ENCODE measurements at regions of chr9 and their contacts with region 1.

Region 1: GRCh38 chr9:4077499-4078102 is 222.3 kb downstream of the GLIS3 start:
- DNase-seq: peak; percentile 75 to 83
- H3K4me3 ChIP-seq: no peak overlapping the region
- H3K27ac ChIP-seq: peak overlapping the region in 1 of 3 donors; percentile 26
- H3K4me1 ChIP-seq: peaks cover 0 to 14% of the 10 kb centered on the region in 2 donors
- H3K27me3 ChIP-seq: no peaks in the 10 kb centered on the region
- CTCF ChIP-seq: peak in 5 of 6 experiments; percentile 15 to 59 (median 54)
- POLR2A ChIP-seq: no peak

Region 2: DNA sequence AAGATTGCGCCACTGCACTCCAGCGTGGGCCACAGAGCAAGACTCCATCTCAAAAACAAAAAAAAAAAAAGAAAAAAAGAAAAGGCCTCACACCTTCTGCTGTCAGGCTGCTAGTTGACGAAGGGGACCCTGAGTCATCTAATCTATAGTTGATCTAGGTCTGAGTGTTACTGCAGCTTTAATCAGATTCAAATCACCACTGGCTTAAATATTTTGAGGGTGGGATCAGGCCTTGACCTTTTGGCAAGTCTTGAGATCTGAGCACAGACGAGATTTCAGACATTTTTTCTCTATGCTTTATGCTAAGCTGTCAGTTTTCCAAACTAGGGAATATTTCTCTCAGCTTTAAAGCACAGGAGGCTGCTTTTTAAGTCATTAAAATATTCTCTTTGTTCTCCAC is 18.7 kb before region 1 on chr9:
- intact Hi-C with region 1: loop called (anchors 2 kb)
- DNase-seq: no peak
- H3K4me3 ChIP-seq: no peak overlapping the region
- H3K27ac ChIP-seq: no peak overlapping the region
- H3K4me1 ChIP-seq: no peaks in the 10 kb centered on the region
- H3K27me3 ChIP-seq: no peaks in the 10 kb centered on the region
- CTCF ChIP-seq: no peak
- POLR2A ChIP-seq: no peak

Region 3: GRCh38 chr9:4590430-4591122 is 513.0 kb after region 1 on chr9:
- intact Hi-C with region 1: no loop called
- DNase-seq: peak; percentile 45 to 46
- H3K4me3 ChIP-seq: no peak overlapping the region
- H3K27ac ChIP-seq: peak overlapping the region; percentile 44 to 97 (median 86)
- H3K4me1 ChIP-seq: peaks cover 44 to 54% of the 10 kb centered on the region in 2 donors
- H3K27me3 ChIP-seq: no peaks in the 10 kb centered on the region
- CTCF ChIP-seq: no peak
- POLR2A ChIP-seq: no peak